ENCODE measurements at regions of chr19 and their contacts with region 1.

Region 1: GRCh38 chr19:16495982-16496612 is at the starts of genes C19orf44 and CALR3:
- DNase-seq: peak; percentile 100
- ATAC-seq: peak; percentile 99
- total RNA-seq, gene C19orf44: 3.3 TPM
- total RNA-seq, gene CALR3: not detected

Region 2: DNA sequence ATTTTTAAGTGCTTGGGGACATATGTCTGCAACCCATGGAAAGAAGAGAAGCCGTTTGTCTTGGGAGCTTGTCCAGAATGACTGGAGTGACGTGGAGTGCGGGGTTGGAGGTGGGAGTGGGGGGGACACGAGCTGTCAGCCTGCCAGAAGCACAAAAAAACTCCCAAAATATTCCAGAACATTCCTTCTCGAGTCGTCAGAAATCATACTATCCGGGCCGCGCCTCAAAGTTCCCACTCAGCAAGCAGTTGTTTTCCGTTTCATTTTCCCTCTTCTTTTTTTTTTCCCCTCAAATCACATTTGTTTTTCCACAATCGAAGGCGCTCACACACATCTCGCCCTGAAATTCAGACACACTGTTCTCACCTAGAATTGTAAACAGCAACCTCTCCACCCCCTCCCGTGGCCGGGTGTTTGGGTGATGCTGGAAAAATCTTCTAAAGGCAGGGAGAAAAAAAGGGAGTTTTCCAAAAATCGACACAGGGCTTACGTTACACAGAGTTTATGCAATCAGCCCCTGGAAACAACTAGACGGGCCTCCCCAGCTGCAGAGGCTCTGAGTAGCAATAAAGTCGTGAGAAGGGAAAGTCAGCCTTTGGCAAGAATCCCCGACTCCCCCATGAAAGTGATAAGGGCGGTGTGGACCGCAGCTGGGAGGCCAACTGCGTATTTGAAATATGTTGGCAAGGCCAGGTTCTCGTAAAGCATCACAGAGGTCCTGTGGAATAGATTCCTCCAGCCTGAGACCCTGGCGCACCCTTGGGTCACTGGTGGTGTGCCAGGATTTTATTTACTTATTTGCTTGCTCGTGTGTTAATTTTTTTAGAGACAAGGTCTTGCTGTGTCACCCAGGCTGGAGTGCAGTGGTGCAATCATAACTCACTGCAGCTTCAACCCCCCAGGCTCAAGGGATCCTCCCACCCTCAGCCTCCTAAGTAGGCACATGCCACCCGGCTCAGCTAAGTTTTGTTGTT is 202.7 kb before region 1 on chr19:
- intact Hi-C with region 1: no loop called
- DNase-seq: peak; percentile 85
- ATAC-seq: peak; percentile 94

Region 3: GRCh38 chr19:16435238-16435917 is 60.7 kb before region 1 on chr19:
- intact Hi-C with region 1: loop called (anchors 5 kb)
- DNase-seq: no peak
- ATAC-seq: peak; percentile 61

Measured in Right ventricle myocardium inferior (tissue), 1 donor.